Left ventricle myocardium superior (tissue), 1 donor: ENCODE measurements at regions of chr7 and their contacts with region 1.

Region 1: DNA sequence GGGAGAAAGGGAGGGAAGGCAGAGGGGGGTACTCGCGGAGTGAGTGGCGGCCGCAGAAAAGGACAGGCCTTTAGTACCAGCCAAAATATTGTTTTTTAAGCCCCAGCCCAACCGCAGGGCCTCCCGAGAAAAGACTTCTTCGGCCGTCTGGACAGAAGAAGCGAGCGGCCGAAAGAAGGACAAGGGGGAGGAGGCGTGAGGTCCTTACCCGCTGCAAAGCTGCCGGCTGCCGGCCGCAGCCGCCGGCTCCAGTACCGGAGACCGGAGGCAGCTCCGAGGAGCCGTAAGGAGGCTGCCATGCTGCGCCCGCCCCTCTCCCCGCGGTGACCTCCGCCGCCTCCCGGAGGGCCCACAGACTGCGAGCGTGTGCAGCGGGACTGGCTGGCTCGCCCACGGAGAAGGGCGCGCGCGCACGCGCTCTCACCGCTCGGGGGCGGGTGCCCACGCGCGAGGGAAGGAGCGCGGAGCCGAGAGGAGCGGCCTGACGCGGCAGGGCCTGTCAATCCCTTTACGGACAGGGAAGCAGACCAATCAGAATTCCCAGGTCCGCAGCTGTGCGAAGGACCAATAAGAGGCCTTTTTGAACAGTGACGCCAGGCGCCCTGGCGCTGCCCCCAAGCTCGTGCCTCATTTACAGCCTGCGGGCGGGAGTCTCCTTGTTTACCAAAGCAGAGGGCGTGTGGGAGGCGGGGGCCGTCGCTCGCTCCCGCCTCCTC is at the start of gene HIBADH:
- DNase-seq: peak; percentile 99
- ATAC-seq: peak; percentile 99
- total RNA-seq, gene HIBADH: 109 TPM

Region 2: DNA sequence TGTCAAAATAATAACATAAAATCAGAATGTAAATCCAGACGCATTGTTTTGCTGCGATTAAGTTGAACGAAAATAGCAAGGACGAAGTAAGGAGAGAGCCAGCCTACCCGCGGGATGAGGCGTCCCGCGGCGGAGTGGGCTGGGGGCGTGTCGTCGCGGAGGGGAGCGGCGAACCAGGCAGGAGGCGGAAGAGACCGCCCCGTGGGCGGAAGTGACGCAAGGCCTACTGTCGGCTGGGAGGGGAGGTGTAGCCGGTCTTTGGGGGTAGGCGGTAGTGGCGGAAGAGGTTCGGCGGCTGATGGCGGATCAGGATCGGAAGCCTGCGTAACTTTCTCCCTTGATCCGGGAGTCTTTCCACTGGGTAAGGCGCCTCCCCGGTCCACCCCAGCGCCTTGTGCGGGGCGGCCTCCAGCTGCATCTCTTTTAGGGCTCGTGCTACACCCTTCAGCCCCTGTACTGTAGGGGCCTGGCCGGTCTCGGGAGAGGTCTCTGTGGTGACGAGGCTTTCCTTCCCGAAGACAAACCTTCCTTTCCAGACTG is 77.3 kb after region 1 on chr7 and contains the start of gene TAX1BP1:
- intact Hi-C with region 1: loop called (anchors 10 kb)
- DNase-seq: peak; percentile 98
- ATAC-seq: peak; percentile 100
- total RNA-seq, gene TAX1BP1: 161 TPM